ENCODE measurements at regions of chr10 and their contacts with region 1.

Region 1: DNA sequence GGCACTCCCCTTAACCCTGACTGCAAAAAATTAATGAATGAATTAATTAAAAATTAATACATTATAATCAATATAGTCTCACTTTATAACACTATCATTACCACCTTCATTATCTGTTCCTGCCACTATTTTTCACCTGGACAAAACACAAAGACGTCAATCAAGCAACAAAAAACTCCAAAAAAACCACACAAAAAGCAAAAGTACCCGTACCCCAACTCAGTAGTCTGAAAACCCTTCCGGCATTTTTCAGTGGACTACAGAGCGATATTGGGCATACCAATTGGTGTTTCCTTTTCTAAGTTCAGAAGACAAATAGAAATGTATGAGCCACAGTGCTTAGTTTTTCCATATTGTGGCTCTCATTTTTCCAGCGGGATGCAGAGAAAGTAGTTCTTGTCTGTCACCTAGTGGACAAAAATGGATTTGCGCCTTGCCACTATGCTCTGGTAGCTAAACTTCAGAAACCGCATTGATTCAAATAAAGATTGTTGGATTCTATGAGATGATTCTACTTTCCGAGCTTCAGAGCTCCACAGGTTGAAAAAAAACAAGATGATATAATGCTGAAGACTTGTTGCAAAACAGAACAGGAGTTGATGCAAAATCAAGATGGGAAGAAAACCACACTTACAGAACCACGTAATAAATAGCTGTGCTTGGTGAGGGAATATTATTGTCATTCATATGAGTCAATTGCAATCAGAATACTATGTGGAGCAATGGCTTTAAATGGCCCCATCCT is 50.6 kb upstream of the ITGB1 start:
- DNase-seq: no peak
- H3K4me3 ChIP-seq: no peak overlapping the region
- H3K27ac ChIP-seq: no peak overlapping the region
- H3K4me1 ChIP-seq: peaks cover 29% of the 10 kb centered on the region
- H3K27me3 ChIP-seq: no peaks in the 10 kb centered on the region
- CTCF ChIP-seq: peak; percentile 100

Region 2: DNA sequence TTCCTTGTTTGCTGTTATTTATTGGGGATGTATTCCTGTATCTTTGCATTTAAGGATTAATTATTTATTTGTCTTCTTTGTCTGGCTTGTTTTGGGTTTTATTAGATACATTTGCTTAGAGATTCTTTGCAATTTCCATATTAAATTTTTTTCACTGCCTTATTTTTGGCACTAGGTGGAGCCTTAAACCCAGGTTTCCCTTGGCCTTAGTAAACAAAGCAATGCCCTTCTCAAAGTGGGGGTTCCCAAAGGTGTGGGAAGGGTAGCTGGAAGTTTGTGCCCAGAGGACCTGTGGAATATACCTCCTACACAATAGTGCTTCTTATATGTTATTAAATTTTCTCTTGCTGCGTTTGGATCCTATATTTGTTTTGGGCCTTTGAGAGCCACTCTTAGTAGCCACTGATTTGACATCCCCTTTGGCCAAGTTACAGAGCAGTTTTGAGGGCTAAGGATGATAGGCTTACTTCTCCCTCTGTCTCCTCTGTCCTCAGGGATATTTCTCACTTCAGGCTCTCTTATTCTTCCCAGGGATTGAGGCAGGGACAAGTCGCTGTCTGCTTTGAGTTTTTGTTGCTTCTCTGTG is 213.0 kb before region 1 on chr10:
- intact Hi-C with region 1: loop called (anchors 2 kb)
- DNase-seq: no peak
- H3K4me3 ChIP-seq: no peak overlapping the region
- H3K27ac ChIP-seq: no peak overlapping the region
- H3K4me1 ChIP-seq: no peaks in the 10 kb centered on the region
- H3K27me3 ChIP-seq: no peaks in the 10 kb centered on the region
- CTCF ChIP-seq: peak; percentile 81

Region 3: DNA sequence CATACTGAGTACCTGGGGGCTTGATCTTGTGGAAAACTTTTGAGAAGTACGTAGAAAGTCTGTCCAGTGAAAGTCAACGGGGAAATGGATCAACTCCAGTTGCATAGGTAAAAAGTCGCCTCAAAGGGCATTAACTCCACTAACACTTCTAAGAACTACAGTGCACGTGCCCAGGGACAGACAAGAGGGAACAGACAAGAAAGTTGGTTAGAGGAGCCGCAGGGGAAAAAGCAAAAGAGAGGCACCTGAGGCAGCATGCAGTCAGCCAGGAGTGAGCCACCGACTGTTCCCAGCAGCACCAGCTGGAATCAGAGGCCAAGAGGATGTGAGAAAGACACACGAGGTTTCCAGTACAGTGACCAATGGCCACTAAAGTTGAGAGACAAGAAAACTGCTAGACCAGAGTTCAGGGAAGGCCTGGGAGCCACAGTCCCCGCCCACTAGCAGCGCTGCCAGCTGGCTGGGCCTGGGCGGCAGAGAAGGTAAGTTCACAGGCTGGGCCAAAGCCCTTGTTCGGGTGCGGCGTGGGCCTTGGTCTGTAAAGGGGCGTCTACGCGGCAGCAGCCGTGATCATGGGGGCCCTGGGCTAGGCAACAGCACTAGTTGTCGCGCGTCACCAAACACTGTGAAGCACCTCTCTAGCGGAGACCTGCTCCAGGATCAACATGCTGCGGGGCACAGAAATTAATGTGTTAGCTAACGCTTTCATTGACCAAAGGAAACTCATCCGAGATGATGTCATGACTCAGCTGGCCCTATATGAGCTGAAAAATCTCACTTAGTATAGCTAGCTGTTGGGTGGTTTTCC is 64.6 kb before region 1 on chr10:
- intact Hi-C with region 1: loop called (anchors 10 kb)
- DNase-seq: peak; percentile 24
- H3K4me3 ChIP-seq: no peak overlapping the region
- H3K27ac ChIP-seq: peak overlapping the region; percentile 85
- H3K4me1 ChIP-seq: peaks cover 98% of the 10 kb centered on the region
- H3K27me3 ChIP-seq: no peaks in the 10 kb centered on the region
- CTCF ChIP-seq: no peak